CD4-positive, alpha-beta T cell (primary cell): ENCODE measurements at regions of chr6 and their contacts with region 1.

Region 1: GRCh38 chr6:26103770-26104456 is 16.7 kb downstream of the HFE start:
- DNase-seq: peak; percentile 84 to 96 (median 90)
- ATAC-seq: peak; percentile 88
- H3K4me3 ChIP-seq: peak overlapping the region; percentile 58
- H3K4me3 Mint-ChIP-seq: peak overlapping the region; percentile 94
- H3K27ac ChIP-seq: peak overlapping the region; percentile 83 to 85
- H3K27ac Mint-ChIP-seq: peak overlapping the region; percentile 99
- H3K4me1 ChIP-seq: peaks cover 16% of the 10 kb centered on the region
- H3K4me1 Mint-ChIP-seq: peaks cover 13% of the 10 kb centered on the region
- H3K27me3 ChIP-seq: no peaks in the 10 kb centered on the region
- H3K27me3 Mint-ChIP-seq: peaks cover 5% of the 10 kb centered on the region
- CTCF ChIP-seq: peak; percentile 58

Region 2: GRCh38 chr6:26054857-26055669 is 48.9 kb before region 1 on chr6:
- CTCF ChIA-PET with region 1: interaction called, 3 read pairs
- POLR2A ChIA-PET with region 1: interaction called, 138 read pairs
- intact Hi-C with region 1: loop called in 1 of 2 experiments (anchors 2 kb)
- DNase-seq: peak; percentile 68 to 97 (median 80)
- ATAC-seq: peak; percentile 71
- H3K4me3 ChIP-seq: peak overlapping the region; percentile 89
- H3K4me3 Mint-ChIP-seq: peak overlapping the region; percentile 97
- H3K27ac ChIP-seq: peak overlapping the region; percentile 81
- H3K27ac Mint-ChIP-seq: peak overlapping the region; percentile 96
- H3K4me1 ChIP-seq: peaks cover 29% of the 10 kb centered on the region
- H3K4me1 Mint-ChIP-seq: peaks cover 28% of the 10 kb centered on the region
- H3K27me3 ChIP-seq: no peaks in the 10 kb centered on the region
- H3K27me3 Mint-ChIP-seq: no peaks in the 10 kb centered on the region
- CTCF ChIP-seq: no peak

Region 3: DNA sequence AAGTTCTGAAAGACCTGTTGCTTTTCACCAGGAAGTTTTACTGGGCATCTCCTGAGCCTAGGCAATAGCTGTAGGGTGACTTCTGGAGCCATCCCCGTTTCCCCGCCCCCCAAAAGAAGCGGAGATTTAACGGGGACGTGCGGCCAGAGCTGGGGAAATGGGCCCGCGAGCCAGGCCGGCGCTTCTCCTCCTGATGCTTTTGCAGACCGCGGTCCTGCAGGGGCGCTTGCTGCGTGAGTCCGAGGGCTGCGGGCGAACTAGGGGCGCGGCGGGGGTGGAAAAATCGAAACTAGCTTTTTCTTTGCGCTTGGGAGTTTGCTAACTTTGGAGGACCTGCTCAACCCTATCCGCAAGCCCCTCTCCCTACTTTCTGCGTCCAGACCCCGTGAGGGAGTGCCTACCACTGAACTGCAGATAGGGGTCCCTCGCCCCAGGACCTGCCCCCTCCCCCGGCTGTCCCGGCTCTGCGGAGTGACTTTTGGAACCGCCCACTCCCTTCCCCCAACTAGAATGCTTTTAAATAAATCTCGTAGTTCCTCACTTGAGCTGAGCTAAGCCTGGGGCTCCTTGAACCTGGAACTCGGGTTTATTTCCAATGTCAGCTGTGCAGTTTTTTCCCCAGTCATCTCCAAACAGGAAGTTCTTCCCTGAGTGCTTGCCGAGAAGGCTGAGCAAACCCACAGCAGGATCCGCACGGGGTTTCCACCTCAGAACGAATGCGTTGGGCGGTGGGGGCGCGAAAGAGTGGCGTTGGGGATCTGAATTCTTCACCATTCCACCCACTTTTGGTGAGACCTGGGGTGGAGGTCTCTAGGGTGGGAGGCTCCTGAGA is 16.4 kb before region 1 on chr6 and contains the start of gene HFE:
- CTCF ChIA-PET with region 1: interaction called, 27 read pairs
- POLR2A ChIA-PET with region 1: interaction called, 74 read pairs
- intact Hi-C with region 1: no loop called
- DNase-seq: peak in 11 of 14 experiments; percentile 3 to 57 (median 21)
- ATAC-seq: peak; percentile 25
- H3K4me3 ChIP-seq: peak within 1 kb of the TSS; percentile 86
- H3K4me3 Mint-ChIP-seq: peak within 1 kb of the TSS; percentile 87
- H3K27ac ChIP-seq: peak within 1 kb of the TSS; percentile 23 to 61
- H3K27ac Mint-ChIP-seq: peak within 1 kb of the TSS; percentile 71
- H3K4me1 ChIP-seq: peaks cover 33% of the 10 kb centered on the region
- H3K4me1 Mint-ChIP-seq: peaks cover 34% of the 10 kb centered on the region
- H3K27me3 ChIP-seq: no peaks in the 10 kb centered on the region
- H3K27me3 Mint-ChIP-seq: no peaks in the 10 kb centered on the region
- CTCF ChIP-seq: no peak
- total RNA-seq, gene HFE: 0.08 to 0.28 TPM

Region 4: DNA sequence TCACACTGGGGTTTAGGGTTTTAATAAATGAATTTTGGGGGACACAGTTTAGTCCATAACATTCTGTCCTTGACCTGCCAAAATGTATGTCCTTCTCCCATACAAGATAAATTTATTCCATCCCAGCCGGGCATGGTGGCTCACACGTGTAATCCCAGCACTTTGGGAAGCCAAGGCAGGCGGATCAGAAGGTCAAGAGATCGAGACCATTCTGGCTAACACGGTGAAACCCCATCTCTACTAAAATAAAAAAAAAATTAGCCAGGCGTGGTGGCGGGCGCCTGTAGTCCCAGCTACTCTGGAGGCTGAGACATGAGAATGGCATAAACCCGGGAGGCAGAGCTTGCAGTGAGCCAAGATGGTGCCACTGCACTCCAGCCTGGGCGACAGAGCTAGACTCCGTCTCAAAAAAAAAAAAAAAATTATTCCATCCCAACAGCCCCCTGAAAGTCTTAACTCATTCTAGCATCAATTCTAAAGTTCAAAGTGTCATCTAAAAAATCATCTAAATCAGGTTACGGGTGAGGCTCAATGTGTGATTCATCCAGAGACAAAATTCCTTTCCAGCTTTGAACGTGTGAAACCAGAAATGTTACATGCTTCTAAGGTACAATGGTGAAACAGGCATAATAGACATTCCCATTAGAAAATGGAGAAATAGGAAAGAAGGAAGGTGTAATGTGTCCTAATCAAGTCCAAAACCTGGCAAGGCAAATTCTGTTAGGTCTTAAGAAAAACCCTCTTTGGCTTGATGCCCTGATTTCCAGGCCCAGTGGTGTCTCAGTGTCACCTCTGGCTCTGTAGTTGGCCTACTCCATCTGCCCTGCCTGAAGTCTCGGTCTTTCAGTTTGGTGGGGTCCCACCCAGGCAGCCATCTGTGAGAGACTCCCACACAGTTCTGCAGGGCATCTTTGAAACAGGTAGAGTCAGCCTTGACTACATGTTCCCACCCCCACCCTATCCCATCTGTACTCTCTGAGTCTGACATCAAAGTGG is 26.6 kb after region 1 on chr6:
- CTCF ChIA-PET with region 1: no interaction called
- POLR2A ChIA-PET with region 1: interaction called, 362 read pairs
- intact Hi-C with region 1: no loop called
- DNase-seq: no peak
- ATAC-seq: no peak
- H3K4me3 ChIP-seq: no peak overlapping the region
- H3K4me3 Mint-ChIP-seq: peak overlapping the region; percentile 9
- H3K27ac ChIP-seq: no peak overlapping the region
- H3K27ac Mint-ChIP-seq: peak overlapping the region; percentile 62
- H3K4me1 ChIP-seq: peaks cover 21% of the 10 kb centered on the region
- H3K4me1 Mint-ChIP-seq: peaks cover 71% of the 10 kb centered on the region
- H3K27me3 ChIP-seq: no peaks in the 10 kb centered on the region
- H3K27me3 Mint-ChIP-seq: no peaks in the 10 kb centered on the region
- CTCF ChIP-seq: no peak

Region 5: DNA sequence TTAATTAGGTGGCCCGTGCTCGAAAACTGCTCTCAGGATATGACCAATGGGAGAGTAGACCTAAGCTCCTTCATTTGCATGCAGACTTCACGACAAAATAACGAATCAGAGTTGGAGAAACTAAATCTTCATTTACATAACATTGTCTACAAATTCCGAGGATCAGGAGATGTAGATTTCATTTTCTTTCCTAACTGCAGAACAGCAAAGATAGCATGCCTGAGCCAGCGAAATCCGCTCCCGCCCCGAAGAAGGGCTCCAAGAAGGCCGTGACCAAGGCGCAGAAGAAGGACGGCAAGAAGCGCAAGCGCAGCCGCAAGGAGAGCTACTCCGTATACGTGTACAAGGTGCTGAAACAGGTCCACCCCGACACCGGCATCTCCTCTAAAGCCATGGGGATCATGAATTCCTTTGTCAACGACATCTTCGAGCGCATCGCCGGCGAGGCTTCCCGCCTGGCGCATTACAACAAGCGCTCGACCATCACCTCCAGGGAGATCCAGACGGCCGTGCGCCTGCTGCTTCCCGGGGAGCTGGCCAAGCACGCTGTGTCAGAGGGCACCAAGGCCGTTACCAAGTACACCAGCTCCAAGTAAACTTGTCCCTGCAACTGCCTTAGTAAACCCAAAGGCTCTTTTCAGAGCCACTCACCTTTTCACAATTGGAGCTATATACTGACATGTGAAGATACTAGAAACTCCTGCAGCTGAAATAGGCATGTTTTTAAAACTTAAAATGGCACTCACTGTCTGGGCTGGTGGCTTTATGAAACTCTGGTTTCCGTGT is 79.9 kb after region 1 on chr6:
- CTCF ChIA-PET with region 1: interaction called, 3 read pairs
- POLR2A ChIA-PET with region 1: interaction called, 20 read pairs
- intact Hi-C with region 1: no loop called
- DNase-seq: peak in 13 of 14 experiments; percentile 20 to 94 (median 48)
- ATAC-seq: peak; percentile 89
- H3K4me3 ChIP-seq: peak overlapping the region; percentile 62
- H3K4me3 Mint-ChIP-seq: peak overlapping the region; percentile 99
- H3K27ac ChIP-seq: peak overlapping the region; percentile 43 to 72
- H3K27ac Mint-ChIP-seq: peak overlapping the region; percentile 86
- H3K4me1 ChIP-seq: peaks cover 34% of the 10 kb centered on the region
- H3K4me1 Mint-ChIP-seq: peaks cover 42% of the 10 kb centered on the region
- H3K27me3 ChIP-seq: no peaks in the 10 kb centered on the region
- H3K27me3 Mint-ChIP-seq: no peaks in the 10 kb centered on the region
- CTCF ChIP-seq: no peak

Region 6: GRCh38 chr6:26249957-26250697 is 146.2 kb after region 1 on chr6:
- CTCF ChIA-PET with region 1: no interaction called
- POLR2A ChIA-PET with region 1: interaction called, 18 read pairs
- intact Hi-C with region 1: no loop called
- DNase-seq: peak; percentile 64 to 93 (median 74)
- ATAC-seq: peak; percentile 78
- H3K4me3 ChIP-seq: peak overlapping the region; percentile 75
- H3K4me3 Mint-ChIP-seq: peak overlapping the region; percentile 97
- H3K27ac ChIP-seq: peak overlapping the region; percentile 72 to 80
- H3K27ac Mint-ChIP-seq: peak overlapping the region; percentile 88
- H3K4me1 ChIP-seq: peaks cover 29% of the 10 kb centered on the region
- H3K4me1 Mint-ChIP-seq: peaks cover 44% of the 10 kb centered on the region
- H3K27me3 ChIP-seq: no peaks in the 10 kb centered on the region
- H3K27me3 Mint-ChIP-seq: no peaks in the 10 kb centered on the region
- CTCF ChIP-seq: no peak